Left cardiac atrium (tissue), 4 donors: ENCODE measurements at regions of chr7 and their contacts with region 1.

Region 1: GRCh38 chr7:37495574-37496184 is 47.0 kb upstream of the ELMO1 start:
- DNase-seq: no peak
- ATAC-seq: no peak

Region 2: DNA sequence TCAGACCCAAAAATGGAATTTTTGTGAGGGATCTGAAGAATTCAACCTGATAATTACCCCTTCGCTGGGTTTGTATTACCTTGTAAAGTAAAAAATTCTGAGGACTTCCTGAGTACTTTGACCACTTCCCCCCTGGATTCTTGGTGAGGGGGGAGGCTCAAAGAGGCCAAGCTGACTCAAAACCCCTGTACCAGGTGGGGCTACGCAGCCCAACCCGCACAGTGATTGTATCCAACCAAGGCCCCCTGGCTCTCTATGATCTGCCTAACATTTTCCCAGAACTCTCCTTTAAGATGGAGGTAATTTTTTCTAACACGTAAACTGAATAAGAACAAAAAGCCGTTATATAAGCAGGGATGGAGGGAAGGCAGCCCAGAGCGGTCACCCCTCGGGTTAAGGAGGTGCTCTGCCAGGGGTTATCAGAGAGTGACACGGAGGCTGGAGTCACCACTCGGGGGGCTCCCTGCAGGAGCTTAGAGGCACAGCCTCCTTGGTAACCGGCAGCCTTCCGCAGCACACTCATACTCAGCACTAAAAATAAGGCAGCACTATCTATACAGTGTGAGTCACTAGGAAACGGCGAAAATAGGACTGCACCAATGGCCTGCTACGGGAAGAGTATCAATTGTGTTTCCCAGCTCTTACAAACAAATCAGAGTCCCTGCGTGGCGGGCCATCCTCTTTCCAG is 302.4 kb before region 1 on chr7:
- intact Hi-C with region 1: no loop called
- DNase-seq: peak; percentile 51
- ATAC-seq: peak; percentile 87 to 97

Region 3: DNA sequence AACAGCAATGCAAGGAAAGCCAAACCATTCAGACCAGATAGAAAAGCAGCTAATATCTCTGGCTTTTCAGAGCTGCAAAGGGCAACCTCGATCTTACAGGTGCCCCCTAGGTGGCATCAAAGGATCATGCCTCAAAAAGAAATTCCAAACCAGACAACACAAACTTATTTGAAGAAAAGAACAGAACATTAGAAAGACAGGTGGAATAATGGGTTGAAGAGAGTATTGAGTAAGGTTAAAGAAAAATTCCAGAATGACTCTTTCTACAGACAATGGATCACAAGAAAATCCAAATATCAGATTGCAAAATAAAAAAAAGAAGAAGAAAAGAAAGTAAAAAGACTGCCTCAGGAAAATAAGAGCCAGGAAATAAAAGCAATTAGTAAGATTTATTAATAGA is 260.8 kb before region 1 on chr7:
- intact Hi-C with region 1: loop called (anchors 10 kb)
- DNase-seq: no peak
- ATAC-seq: no peak